Mammary epithelial cell (primary cell): ENCODE measurements at regions of chr2 and their contacts with region 1.

Region 1: GRCh38 chr2:127841466-127842178 is 16.3 kb downstream of the POLR2D start:
- DNase-seq: no peak
- H3K4me3 ChIP-seq: no peak overlapping the region
- H3K27ac ChIP-seq: no peak overlapping the region
- H3K4me1 ChIP-seq: no peaks in the 10 kb centered on the region
- H3K27me3 ChIP-seq: no peaks in the 10 kb centered on the region
- CTCF ChIP-seq: no peak

Region 2: DNA sequence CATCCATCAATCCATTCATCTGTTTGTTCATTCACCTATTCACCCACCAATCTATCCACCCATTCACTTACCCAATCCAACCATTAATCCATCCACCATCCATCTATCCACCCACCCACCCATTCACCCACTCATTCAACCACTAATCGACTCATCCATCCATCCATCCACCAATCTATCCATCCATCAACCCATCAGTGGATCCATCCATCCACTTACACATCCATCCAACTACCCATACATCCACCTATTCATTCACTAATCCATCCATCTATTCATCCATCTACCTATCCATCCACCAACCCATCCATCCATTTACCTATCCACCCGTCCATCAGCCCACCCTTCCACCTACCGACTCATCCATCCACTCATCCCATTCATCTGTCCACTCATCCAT is 294.8 kb before region 1 on chr2:
- CTCF ChIA-PET with region 1: no interaction called
- dilution Hi-C with region 1: no loop called
- in situ Hi-C with region 1: no loop called
- intact Hi-C with region 1: no loop called
- DNase-seq: no peak
- H3K4me3 ChIP-seq: no peak overlapping the region
- H3K27ac ChIP-seq: no peak overlapping the region
- H3K4me1 ChIP-seq: no peaks in the 10 kb centered on the region
- H3K27me3 ChIP-seq: no peaks in the 10 kb centered on the region
- CTCF ChIP-seq: no peak

Region 3: GRCh38 chr2:127701651-127702394 is 139.8 kb before region 1 on chr2:
- CTCF ChIA-PET with region 1: no interaction called
- dilution Hi-C with region 1: no loop called
- in situ Hi-C with region 1: no loop called
- intact Hi-C with region 1: no loop called
- DNase-seq: peak; percentile 64
- H3K4me3 ChIP-seq: peak overlapping the region; percentile 72 to 87 (median 80)
- H3K27ac ChIP-seq: peak overlapping the region; percentile 72
- H3K4me1 ChIP-seq: peaks cover 19% of the 10 kb centered on the region
- H3K27me3 ChIP-seq: no peaks in the 10 kb centered on the region
- CTCF ChIP-seq: peak in 1 of 2 donors; percentile 5

Region 4: DNA sequence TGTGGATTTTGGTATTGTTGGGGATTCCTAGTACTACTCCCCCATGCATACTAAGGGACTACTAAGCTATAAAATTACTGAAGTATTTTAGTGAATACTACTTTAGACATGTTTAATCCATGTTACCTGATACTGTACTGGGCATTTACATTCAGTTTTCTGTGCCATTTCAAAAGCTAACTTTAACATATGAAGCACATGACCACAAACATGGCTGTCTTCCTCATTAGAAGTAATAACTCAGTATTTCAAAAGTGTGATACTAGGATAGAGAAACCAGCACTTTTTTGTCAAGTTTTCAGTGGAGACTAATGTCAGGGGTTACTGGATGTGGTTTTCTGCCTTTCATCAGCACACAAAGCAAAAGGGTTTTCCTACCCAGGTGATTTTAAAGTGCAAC is 58.5 kb before region 1 on chr2:
- CTCF ChIA-PET with region 1: interaction called, 11 read pairs
- dilution Hi-C with region 1: no loop called
- in situ Hi-C with region 1: no loop called
- intact Hi-C with region 1: no loop called
- DNase-seq: no peak
- H3K4me3 ChIP-seq: no peak overlapping the region
- H3K27ac ChIP-seq: no peak overlapping the region
- H3K4me1 ChIP-seq: no peaks in the 10 kb centered on the region
- H3K27me3 ChIP-seq: no peaks in the 10 kb centered on the region
- CTCF ChIP-seq: no peak

Region 5: GRCh38 chr2:127865926-127866325 is 24.3 kb after region 1 on chr2:
- CTCF ChIA-PET with region 1: interaction called, 20 read pairs
- dilution Hi-C with region 1: no loop called
- in situ Hi-C with region 1: no loop called
- intact Hi-C with region 1: no loop called
- DNase-seq: no peak
- H3K4me3 ChIP-seq: no peak overlapping the region
- H3K27ac ChIP-seq: no peak overlapping the region
- H3K4me1 ChIP-seq: no peaks in the 10 kb centered on the region
- H3K27me3 ChIP-seq: no peaks in the 10 kb centered on the region
- CTCF ChIP-seq: no peak